ENCODE measurements at regions of chr18 and their contacts with region 1.

Region 1: GRCh38 chr18:7272311-7273049 is 41.6 kb downstream of the LRRC30 start:
- DNase-seq: peak; percentile 76 to 80
- H3K4me3 ChIP-seq: no peak overlapping the region
- H3K27ac ChIP-seq: peak overlapping the region in 2 of 3 donors; percentile 49 to 74
- H3K4me1 ChIP-seq: peaks cover 9 to 15% of the 10 kb centered on the region in 2 donors
- H3K27me3 ChIP-seq: no peaks in the 10 kb centered on the region
- CTCF ChIP-seq: peak in 5 of 6 experiments; percentile 29 to 73 (median 61)
- POLR2A ChIP-seq: no peak

Region 2: GRCh38 chr18:7146067-7146466 is 126.4 kb before region 1 on chr18:
- intact Hi-C with region 1: no loop called
- DNase-seq: no peak
- H3K4me3 ChIP-seq: no peak overlapping the region
- H3K27ac ChIP-seq: no peak overlapping the region
- H3K4me1 ChIP-seq: peaks cover 0 to 7% of the 10 kb centered on the region in 2 donors
- H3K27me3 ChIP-seq: no peaks in the 10 kb centered on the region
- CTCF ChIP-seq: no peak
- POLR2A ChIP-seq: no peak

Region 3: DNA sequence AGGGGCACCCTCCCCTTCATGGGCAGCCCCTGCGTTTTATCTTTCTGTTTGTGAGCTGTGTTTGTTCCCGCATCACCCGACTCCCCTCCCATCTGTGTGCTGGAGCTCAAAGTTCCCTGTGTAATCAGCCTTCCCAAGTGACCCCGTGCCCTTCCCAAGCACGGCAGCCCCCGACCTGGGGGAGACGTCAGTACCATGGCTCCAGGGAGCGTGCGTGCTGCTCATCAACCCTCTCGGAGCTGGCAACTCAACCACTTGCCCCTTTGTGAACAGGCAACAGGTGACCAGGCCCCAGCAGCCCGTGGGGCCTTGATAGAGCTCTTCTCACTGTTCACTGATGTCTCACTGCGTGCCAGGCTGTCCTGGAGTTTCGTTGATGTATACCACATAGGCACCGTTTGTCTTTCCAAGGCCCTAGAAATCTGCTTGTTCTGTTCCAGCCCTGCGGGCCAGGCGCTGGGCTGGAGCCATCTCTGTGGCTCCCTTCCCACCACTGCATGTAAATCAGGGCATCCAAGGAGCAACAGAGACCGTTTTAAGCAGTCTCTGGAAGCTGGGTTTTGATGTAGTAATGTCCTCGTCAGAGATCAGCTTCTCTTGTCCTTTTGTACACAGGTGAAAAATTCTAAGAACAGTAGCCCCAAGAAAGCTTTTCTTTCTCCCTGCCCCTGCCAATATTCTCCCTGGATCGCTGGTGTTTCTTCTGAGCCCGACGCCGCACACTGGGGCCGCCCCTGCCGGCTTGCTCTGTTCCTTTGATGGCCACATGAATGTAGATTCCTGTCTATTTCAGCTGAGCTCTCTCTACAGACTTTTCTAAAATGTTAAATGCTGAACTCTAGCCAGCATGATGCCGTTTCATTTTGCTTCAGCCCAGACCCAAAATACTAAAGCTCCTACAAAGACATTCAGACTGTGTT is 187.6 kb after region 1 on chr18:
- intact Hi-C with region 1: loop called (anchors 5 kb)
- DNase-seq: no peak
- H3K4me3 ChIP-seq: no peak overlapping the region
- H3K27ac ChIP-seq: no peak overlapping the region
- H3K4me1 ChIP-seq: peaks cover 6 to 8% of the 10 kb centered on the region in 2 donors
- H3K27me3 ChIP-seq: no peaks in the 10 kb centered on the region
- CTCF ChIP-seq: no peak
- POLR2A ChIP-seq: no peak

Region 4: GRCh38 chr18:7566567-7567473 is 294.3 kb after region 1 on chr18 and contains the start of gene PTPRM:
- intact Hi-C with region 1: loop called (anchors 5 kb)
- DNase-seq: peak; percentile 88 to 90
- H3K4me3 ChIP-seq: peak within 1 kb of the TSS; percentile 87 to 98 (median 95)
- H3K27ac ChIP-seq: peak within 1 kb of the TSS; percentile 98 to 99 (median 99)
- H3K4me1 ChIP-seq: peaks cover 21 to 35% of the 10 kb centered on the region in 2 donors
- H3K27me3 ChIP-seq: no peaks in the 10 kb centered on the region
- CTCF ChIP-seq: peak in 3 of 6 experiments; percentile 82 to 91 (median 86)
- POLR2A ChIP-seq: peak; percentile 90 to 96
- total RNA-seq, gene PTPRM: 170 to 198 (median 182) TPM

Region 5: DNA sequence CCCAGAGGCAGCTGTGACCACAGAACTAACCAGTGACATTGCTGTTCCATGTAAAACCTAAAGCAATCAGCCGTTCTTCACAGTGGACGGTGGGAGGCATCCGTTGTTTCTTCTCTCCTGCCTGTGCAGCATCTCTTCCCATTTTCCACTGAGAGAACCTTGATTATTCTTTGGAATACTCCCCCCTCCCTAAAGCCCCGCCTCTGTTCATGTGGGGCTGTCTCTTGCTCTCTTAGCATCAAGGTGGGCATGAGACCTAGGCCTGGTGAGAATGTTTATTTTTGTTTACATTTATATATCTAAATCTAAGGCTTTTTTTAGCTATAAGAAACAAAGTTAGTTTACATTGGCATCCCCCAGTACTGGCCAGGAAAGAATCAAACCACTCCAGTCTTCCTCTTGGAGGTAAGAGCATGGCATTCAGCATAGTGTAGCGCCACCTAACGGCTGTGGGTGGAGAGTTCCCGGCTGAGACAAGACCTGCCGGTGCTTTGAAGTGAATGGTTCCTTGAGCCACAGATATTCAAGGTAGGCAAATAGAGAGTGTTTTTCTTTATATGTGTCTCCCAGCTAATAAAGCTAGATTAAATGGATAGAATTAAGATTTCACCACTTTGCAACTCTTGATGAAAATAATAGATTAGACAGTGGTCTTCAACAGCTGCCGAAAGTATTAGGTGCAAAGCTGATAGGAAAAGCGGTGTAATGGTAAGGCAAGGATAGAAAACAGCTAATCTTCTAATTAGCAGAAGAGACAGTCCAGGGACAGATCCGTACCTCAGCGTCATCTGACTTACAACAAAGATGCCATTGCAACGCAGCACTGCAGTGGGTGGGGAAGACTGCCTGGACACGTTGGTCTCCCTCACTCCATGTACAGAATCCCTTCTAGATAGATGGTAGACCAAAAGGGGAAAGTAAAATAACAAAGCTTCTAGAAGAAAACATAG is 1117.2 kb after region 1 on chr18:
- intact Hi-C with region 1: loop called (anchors 5 kb)
- DNase-seq: peak; percentile 82 to 89
- H3K4me3 ChIP-seq: no peak overlapping the region
- H3K27ac ChIP-seq: no peak overlapping the region
- H3K4me1 ChIP-seq: no peaks in the 10 kb centered on the region
- H3K27me3 ChIP-seq: no peaks in the 10 kb centered on the region
- CTCF ChIP-seq: peak; percentile 74 to 85 (median 84)
- POLR2A ChIP-seq: no peak

Measured in thyroid gland (tissue), 4 donors.